Naive thymus-derived CD4-positive, alpha-beta T cell (primary cell): ENCODE measurements at regions of chr12 and their contacts with region 1.

Region 1: DNA sequence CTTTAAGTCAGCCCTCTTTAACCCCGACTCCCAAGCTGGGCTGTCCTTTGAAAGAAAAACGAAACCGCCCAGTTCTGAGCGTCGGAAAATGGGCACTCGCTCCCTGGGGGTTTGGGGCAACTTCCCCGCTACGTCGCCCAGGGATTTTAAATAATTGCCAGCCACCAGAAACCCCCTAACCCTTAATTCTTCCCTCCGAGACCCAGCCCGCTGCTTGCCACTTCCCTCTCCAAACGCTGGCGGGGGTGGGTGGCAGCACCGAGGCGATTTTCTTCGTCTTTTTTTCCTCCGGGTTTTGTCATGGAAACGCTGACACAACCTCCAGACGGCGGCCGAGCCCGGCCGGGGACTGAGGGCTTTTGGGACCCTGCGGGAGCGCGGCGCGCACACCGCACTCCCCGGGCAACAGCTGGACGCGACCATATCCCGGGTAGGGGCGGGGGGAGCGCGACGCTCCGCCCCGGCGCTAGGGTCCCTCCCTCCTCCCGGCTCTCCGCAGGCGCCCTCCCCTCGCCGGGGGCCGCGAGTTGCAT is at the start of gene CHST11:
- DNase-seq: peak in 8 of 9 donors; percentile 33 to 84 (median 60)
- ATAC-seq: peak; percentile 83
- H3K4me3 ChIP-seq: peak within 1 kb of the TSS; percentile 83
- H3K4me3 Mint-ChIP-seq: peak within 1 kb of the TSS; percentile 75 to 100 (median 99)
- H3K27ac ChIP-seq: peak within 1 kb of the TSS; percentile 85
- H3K27ac Mint-ChIP-seq: peak within 1 kb of the TSS; percentile 84 to 99 (median 95)
- H3K4me1 ChIP-seq: peaks cover 25% of the 10 kb centered on the region in 2 donors
- H3K4me1 Mint-ChIP-seq: peaks cover 19 to 47% (median 36%) of the 10 kb centered on the region in 7 donors
- H3K27me3 ChIP-seq: no peaks in the 10 kb centered on the region
- H3K27me3 Mint-ChIP-seq: peaks cover 0 to 7% (median 0%) of the 10 kb centered on the region in 5 donors
- total RNA-seq, gene CHST11: 31.9 to 74.3 (median 42.0) TPM

Region 2: GRCh38 chr12:104064031-104064822 is 392.3 kb before region 1 on chr12 and contains the start of gene HCFC2:
- CTCF ChIA-PET with region 1: no interaction called
- POLR2A ChIA-PET with region 1: no interaction called
- intact Hi-C with region 1: loop called in 1 of 2 experiments (anchors 10 kb)
- DNase-seq: peak; percentile 77 to 93 (median 83)
- ATAC-seq: peak; percentile 99
- H3K4me3 ChIP-seq: peak within 1 kb of the TSS; percentile 95
- H3K4me3 Mint-ChIP-seq: peak within 1 kb of the TSS; percentile 88 to 97 (median 94)
- H3K27ac ChIP-seq: peak within 1 kb of the TSS; percentile 79
- H3K27ac Mint-ChIP-seq: peak within 1 kb of the TSS; percentile 71 to 96 (median 90)
- H3K4me1 ChIP-seq: peaks cover 5 to 9% of the 10 kb centered on the region in 2 donors
- H3K4me1 Mint-ChIP-seq: peaks cover 13 to 31% (median 21%) of the 10 kb centered on the region in 7 donors
- H3K27me3 ChIP-seq: no peaks in the 10 kb centered on the region
- H3K27me3 Mint-ChIP-seq: peaks cover 5 to 27% (median 13%) of the 10 kb centered on the region in 5 donors
- total RNA-seq, gene HCFC2: 11.4 to 20.2 (median 16.2) TPM

Region 3: GRCh38 chr12:104381731-104382480 is 74.6 kb before region 1 on chr12:
- CTCF ChIA-PET with region 1: interaction called, 3 read pairs
- POLR2A ChIA-PET with region 1: no interaction called
- intact Hi-C with region 1: loop called (anchors 1 kb)
- DNase-seq: peak; percentile 62 to 86 (median 74)
- ATAC-seq: peak; percentile 94
- H3K4me3 ChIP-seq: no peak overlapping the region
- H3K4me3 Mint-ChIP-seq: no peak overlapping the region
- H3K27ac ChIP-seq: no peak overlapping the region
- H3K27ac Mint-ChIP-seq: peak overlapping the region in 1 of 9 donors; percentile 17
- H3K4me1 ChIP-seq: peaks cover 0 to 6% of the 10 kb centered on the region in 2 donors
- H3K4me1 Mint-ChIP-seq: peaks cover 0 to 18% (median 6%) of the 10 kb centered on the region in 7 donors
- H3K27me3 ChIP-seq: no peaks in the 10 kb centered on the region
- H3K27me3 Mint-ChIP-seq: peaks cover 0 to 15% (median 10%) of the 10 kb centered on the region in 5 donors

Region 4: GRCh38 chr12:104411826-104412641 is 44.4 kb before region 1 on chr12:
- CTCF ChIA-PET with region 1: no interaction called
- POLR2A ChIA-PET with region 1: no interaction called
- intact Hi-C with region 1: no loop called
- DNase-seq: no peak
- ATAC-seq: no peak
- H3K4me3 ChIP-seq: no peak overlapping the region
- H3K4me3 Mint-ChIP-seq: no peak overlapping the region
- H3K27ac ChIP-seq: no peak overlapping the region
- H3K27ac Mint-ChIP-seq: peak overlapping the region in 3 of 9 donors; percentile 38 to 63 (median 41)
- H3K4me1 ChIP-seq: no peaks in the 10 kb centered on the region
- H3K4me1 Mint-ChIP-seq: peaks cover 0 to 4% (median 0%) of the 10 kb centered on the region in 7 donors
- H3K27me3 ChIP-seq: no peaks in the 10 kb centered on the region
- H3K27me3 Mint-ChIP-seq: peaks cover 0 to 3% (median 0%) of the 10 kb centered on the region in 5 donors

Region 5: GRCh38 chr12:104494137-104494792 is 37.8 kb after region 1 on chr12:
- CTCF ChIA-PET with region 1: interaction called, 5 read pairs
- POLR2A ChIA-PET with region 1: interaction called, 5 read pairs
- intact Hi-C with region 1: loop called (anchors 1 kb)
- DNase-seq: peak in 8 of 9 donors; percentile 31 to 51 (median 36)
- ATAC-seq: peak; percentile 51
- H3K4me3 ChIP-seq: peak overlapping the region; percentile 18
- H3K4me3 Mint-ChIP-seq: peak overlapping the region; percentile 18 to 88 (median 76)
- H3K27ac ChIP-seq: peak overlapping the region; percentile 42
- H3K27ac Mint-ChIP-seq: peak overlapping the region; percentile 78 to 93 (median 91)
- H3K4me1 ChIP-seq: peaks cover 72 to 85% of the 10 kb centered on the region in 2 donors
- H3K4me1 Mint-ChIP-seq: peaks cover 58 to 96% (median 86%) of the 10 kb centered on the region in 7 donors
- H3K27me3 ChIP-seq: no peaks in the 10 kb centered on the region
- H3K27me3 Mint-ChIP-seq: no peaks in the 10 kb centered on the region

Region 6: GRCh38 chr12:104582739-104583138 is 126.3 kb after region 1 on chr12:
- CTCF ChIA-PET with region 1: no interaction called
- POLR2A ChIA-PET with region 1: no interaction called
- intact Hi-C with region 1: loop called in 1 of 2 experiments (anchors 2 kb)
- DNase-seq: peak in 2 of 9 donors; percentile 9
- ATAC-seq: peak; percentile 34
- H3K4me3 ChIP-seq: no peak overlapping the region
- H3K4me3 Mint-ChIP-seq: no peak overlapping the region
- H3K27ac ChIP-seq: no peak overlapping the region
- H3K27ac Mint-ChIP-seq: peak overlapping the region in 5 of 9 donors; percentile 3 to 39 (median 19)
- H3K4me1 ChIP-seq: peaks cover 0 to 6% of the 10 kb centered on the region in 2 donors
- H3K4me1 Mint-ChIP-seq: peaks cover 31 to 84% (median 56%) of the 10 kb centered on the region in 7 donors
- H3K27me3 ChIP-seq: no peaks in the 10 kb centered on the region
- H3K27me3 Mint-ChIP-seq: no peaks in the 10 kb centered on the region

Region 7: DNA sequence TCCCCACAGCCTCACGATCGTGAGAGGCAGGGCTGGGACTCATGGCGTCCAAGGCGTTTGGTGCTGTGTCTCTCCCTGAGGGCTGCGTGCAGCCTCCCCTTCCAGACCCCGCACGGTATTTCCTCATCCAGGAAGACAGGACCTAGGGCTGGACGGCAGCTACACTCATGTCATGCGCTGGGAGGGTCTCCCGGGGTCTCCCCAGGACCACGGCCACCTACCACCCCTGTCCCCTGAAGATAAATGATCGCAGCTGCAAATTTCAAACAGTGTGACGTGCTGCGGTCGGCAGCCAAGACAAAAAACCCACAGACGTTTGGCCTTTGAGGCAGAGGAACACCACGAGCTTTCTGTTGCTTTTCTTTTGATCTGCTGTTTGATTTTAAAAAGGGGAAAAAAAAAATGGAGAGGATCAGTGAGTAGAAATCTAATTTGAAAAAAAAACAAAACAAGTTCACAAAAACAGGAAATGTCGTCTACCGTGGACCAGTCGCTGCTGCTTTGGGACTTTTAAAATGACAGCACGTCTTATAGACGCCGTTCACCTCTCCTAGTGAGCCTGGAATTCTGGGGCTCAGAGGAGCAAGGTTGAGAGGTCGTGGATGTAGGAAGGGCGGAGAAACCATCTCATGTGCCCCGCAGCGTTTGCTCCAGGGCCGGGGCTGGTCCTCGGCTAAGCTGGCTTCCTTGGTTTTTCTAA is 264.0 kb after region 1 on chr12:
- CTCF ChIA-PET with region 1: no interaction called
- POLR2A ChIA-PET with region 1: interaction called, 3 read pairs
- intact Hi-C with region 1: loop called in 1 of 2 experiments (anchors 1 kb)
- DNase-seq: peak; percentile 32 to 92 (median 88)
- ATAC-seq: peak; percentile 87
- H3K4me3 ChIP-seq: peak overlapping the region; percentile 72
- H3K4me3 Mint-ChIP-seq: peak overlapping the region; percentile 73 to 95 (median 81)
- H3K27ac ChIP-seq: peak overlapping the region; percentile 77
- H3K27ac Mint-ChIP-seq: peak overlapping the region; percentile 86 to 96 (median 92)
- H3K4me1 ChIP-seq: peaks cover 30 to 39% of the 10 kb centered on the region in 2 donors
- H3K4me1 Mint-ChIP-seq: peaks cover 41 to 82% (median 65%) of the 10 kb centered on the region in 7 donors
- H3K27me3 ChIP-seq: no peaks in the 10 kb centered on the region
- H3K27me3 Mint-ChIP-seq: peaks cover 0 to 3% (median 0%) of the 10 kb centered on the region in 5 donors

Region 8: GRCh38 chr12:105053116-105053572 is 596.7 kb after region 1 on chr12:
- CTCF ChIA-PET with region 1: no interaction called
- POLR2A ChIA-PET with region 1: no interaction called
- intact Hi-C with region 1: loop called in 1 of 2 experiments (anchors 1 kb)
- DNase-seq: peak; percentile 35 to 76 (median 67)
- ATAC-seq: peak; percentile 94
- H3K4me3 ChIP-seq: no peak overlapping the region
- H3K4me3 Mint-ChIP-seq: no peak overlapping the region
- H3K27ac ChIP-seq: no peak overlapping the region
- H3K27ac Mint-ChIP-seq: no peak overlapping the region
- H3K4me1 ChIP-seq: no peaks in the 10 kb centered on the region
- H3K4me1 Mint-ChIP-seq: peaks cover 0 to 5% (median 0%) of the 10 kb centered on the region in 7 donors
- H3K27me3 ChIP-seq: no peaks in the 10 kb centered on the region
- H3K27me3 Mint-ChIP-seq: peaks cover 0 to 7% (median 0%) of the 10 kb centered on the region in 5 donors